Activated CD8-positive, alpha-beta T cell treated with anti-CD3 and anti-CD28 coated beads for 36 hours (primary cell): ENCODE measurements at regions of chr9 and their contacts with region 1.

Region 1: DNA sequence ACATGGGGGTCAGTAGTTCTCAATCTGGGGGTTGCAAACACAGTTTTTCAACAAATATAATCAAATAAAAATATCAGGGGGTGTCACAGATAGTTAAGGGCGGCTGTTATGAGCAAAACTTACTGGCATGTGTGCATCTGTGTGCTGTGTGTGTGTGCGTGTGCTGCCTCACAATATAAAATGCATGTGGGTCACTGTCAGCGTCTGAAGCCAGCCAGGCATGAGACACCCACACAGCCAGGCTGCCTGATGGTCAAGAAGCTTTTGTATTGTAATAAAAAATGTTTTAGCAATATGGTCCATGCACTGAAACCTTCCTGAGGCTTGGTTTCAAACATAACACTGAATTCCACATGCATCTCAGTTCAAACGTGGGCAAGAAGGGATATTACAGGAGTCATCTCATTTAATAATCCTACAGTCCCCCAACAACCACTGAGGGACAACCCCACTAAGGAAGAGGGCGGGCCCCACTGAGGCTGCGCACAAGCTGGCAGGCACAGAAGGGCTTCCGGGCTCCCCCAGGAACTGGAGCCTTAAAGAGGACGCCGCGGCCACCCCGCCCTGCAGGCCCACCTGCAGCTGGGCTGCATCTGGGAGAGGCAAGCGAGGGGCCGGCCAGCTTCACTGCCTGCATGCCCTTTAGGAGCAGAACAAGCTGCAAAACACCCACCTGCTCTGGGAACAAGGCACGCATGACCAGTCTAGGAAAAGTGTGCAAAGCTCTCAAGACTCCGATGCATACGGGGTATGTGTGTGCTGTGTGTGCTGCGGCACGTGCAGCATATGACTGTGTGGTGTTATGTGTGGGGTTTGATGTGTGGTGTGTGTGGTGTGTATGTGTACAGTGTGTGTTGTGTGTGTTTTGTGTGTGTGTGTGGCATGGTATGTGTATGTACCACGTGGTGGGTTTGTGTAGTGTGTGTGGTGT is 14.1 kb downstream of the SEMA4D start:
- DNase-seq: peak; percentile 91
- ATAC-seq: peak; percentile 75
- H3K4me3 Mint-ChIP-seq: peak overlapping the region; percentile 86
- H3K27ac Mint-ChIP-seq: peak overlapping the region; percentile 93
- H3K4me1 Mint-ChIP-seq: peaks cover 86% of the 10 kb centered on the region
- H3K27me3 Mint-ChIP-seq: peaks cover 3% of the 10 kb centered on the region
- CTCF ChIP-seq: no peak

Region 2: GRCh38 chr9:89497978-89498851 is 14.4 kb after region 1 on chr9 and contains the start of gene SEMA4D:
- CTCF ChIA-PET with region 1: interaction called, 7 read pairs
- POLR2A ChIA-PET with region 1: interaction called, 15 read pairs
- intact Hi-C with region 1: no loop called
- DNase-seq: peak; percentile 74
- ATAC-seq: peak; percentile 17
- H3K4me3 Mint-ChIP-seq: peak within 1 kb of the TSS; percentile 92
- H3K27ac Mint-ChIP-seq: peak within 1 kb of the TSS; percentile 94
- H3K4me1 Mint-ChIP-seq: peaks cover 77% of the 10 kb centered on the region
- H3K27me3 Mint-ChIP-seq: no peaks in the 10 kb centered on the region
- CTCF ChIP-seq: no peak
- total RNA-seq, gene SEMA4D: 290 to 317 TPM

Region 3: GRCh38 chr9:89536145-89536574 is 52.3 kb after region 1 on chr9:
- CTCF ChIA-PET with region 1: interaction called, 4 read pairs
- POLR2A ChIA-PET with region 1: interaction called, 6 read pairs
- intact Hi-C with region 1: loop called (anchors 5 kb)
- DNase-seq: peak; percentile 47
- ATAC-seq: peak; percentile 73
- H3K4me3 Mint-ChIP-seq: peak overlapping the region; percentile 47
- H3K27ac Mint-ChIP-seq: peak overlapping the region; percentile 96
- H3K4me1 Mint-ChIP-seq: peaks cover 88% of the 10 kb centered on the region
- H3K27me3 Mint-ChIP-seq: no peaks in the 10 kb centered on the region
- CTCF ChIP-seq: no peak